ENCODE measurements at regions of chr19 and their contacts with region 1.

Region 1: GRCh38 chr19:32570081-32570785 is 10.8 kb upstream of the PDCD5 start:
- DNase-seq: peak; percentile 67

Region 2: DNA sequence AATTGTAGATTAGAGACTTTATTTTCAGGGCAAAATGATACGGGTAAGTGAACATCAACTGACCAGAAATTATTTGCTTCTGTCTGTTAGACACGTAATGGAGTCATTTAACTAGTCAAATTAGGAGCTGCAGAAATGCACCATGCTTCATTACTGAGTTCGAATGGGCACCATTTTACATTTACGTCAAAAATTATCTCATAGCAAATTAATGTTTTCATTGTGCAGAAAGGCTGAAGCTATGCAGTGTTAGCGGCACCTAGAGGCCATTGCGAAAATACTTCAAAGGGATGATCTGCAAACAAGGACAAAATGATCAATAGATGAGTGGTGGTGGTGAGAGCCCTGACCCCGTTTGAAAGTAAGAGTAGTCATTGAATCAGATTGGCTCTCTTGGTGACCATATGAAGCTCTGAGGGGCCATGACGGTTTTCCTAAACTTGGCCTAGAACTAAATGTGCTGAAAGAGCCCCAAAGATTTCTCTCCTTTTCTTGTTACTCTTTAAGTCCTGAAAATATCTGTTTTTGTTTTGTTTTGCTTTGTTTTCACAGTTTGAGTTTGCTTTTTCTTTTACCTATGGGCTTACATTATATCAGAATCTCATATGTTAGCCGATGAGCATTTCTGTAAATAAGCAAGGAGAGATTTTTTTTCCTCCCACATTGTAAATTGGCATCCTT is 1920.2 kb before region 1 on chr19:
- in situ Hi-C with region 1: loop called (anchors 25 kb)
- DNase-seq: peak; percentile 51

Region 3: GRCh38 chr19:32287811-32288227 is 282.4 kb before region 1 on chr19:
- in situ Hi-C with region 1: loop called (anchors 25 kb)
- DNase-seq: peak; percentile 65

Region 4: DNA sequence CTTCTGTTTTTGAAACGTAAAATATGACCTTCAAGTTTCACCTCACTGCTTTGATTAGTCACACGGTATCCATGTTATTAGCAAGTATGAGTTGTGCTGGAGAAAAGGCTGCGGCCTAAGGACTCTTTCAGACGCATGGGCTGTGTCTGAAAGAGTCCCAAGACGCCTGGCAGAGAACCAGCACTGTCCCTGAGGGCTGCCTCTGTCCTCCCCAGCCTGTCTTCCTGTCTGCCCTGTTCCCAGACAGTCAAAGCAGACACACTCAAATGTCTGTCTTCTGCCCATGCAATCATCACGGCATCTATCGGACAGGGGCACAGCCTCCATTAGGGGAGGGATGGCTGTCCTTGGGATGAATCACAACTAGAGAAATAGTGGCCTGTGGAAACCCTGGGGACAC is 99.1 kb before region 1 on chr19:
- in situ Hi-C with region 1: no loop called
- DNase-seq: no peak

Region 5: DNA sequence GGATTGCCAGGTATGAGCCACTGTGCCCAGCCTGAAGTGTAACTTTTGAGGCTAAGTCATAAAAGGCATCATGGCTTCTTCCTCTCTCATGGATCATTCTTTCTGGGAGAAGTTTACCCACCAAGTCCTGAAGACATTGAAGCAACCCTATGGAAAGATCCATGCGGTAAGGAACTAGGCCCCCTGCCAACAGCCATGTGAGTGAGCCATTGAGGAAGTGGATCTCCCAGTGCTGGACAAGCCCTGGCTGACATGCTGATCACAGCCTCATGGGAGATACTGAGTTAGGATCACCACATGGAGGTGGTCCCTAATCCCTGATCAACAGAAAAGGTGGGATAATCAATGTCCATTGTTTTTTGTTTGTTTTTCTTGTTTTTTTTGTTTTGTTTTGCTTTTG is 118.1 kb after region 1 on chr19:
- in situ Hi-C with region 1: no loop called
- DNase-seq: no peak